Activated CD4-positive, alpha-beta T cell treated with anti-CD3 and anti-CD28 coated beads, Interleukin-2, amount 10 ng/mL, durations not matched to agents 7 days and 5 days (primary cell): ENCODE measurements at regions of chr1 and their contacts with region 1.

Region 1: DNA sequence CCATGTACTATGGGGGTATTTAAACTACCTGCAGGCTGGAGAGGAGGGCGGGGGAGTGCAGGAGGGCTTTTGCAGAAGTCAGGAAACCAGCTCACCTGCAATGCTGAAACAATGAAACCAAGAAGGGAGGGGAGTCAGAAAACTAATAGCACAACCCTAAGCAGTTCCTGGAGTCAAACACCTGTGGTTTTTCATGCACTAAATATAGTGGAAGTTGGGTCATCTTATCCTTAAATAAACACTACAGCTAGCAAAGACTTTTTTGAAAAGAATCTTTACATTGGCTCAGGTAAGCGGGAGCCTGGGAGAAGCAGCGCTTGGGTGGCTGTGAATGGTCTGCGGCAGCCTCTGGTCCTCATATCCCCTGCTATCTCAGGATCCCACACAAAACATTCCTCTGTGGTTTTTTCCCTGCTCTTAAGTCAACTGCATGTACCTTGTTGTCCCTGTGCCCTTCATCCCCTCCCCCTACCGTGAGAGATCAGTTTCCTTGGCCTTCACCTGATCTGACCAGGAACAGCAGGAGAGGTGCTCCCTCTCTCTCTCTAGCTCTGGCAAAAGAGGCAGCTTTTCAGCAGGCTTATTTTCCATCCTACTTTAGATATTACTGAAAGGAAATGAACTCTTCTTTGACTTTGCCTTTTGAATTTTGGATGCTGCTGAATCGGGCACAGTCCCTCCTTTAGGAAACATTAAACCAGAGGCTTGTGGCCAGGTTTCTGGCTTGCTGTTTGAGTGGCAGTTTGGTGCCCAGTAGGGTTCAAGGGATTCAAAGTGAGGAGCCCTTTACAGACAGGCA is 26.6 kb downstream of the TENT5C start:
- DNase-seq: no peak
- H3K4me3 Mint-ChIP-seq: peak overlapping the region; percentile 32
- H3K27ac Mint-ChIP-seq: peak overlapping the region; percentile 6
- H3K4me1 Mint-ChIP-seq: peaks cover 50% of the 10 kb centered on the region
- H3K27me3 Mint-ChIP-seq: peaks cover 14% of the 10 kb centered on the region

Region 2: DNA sequence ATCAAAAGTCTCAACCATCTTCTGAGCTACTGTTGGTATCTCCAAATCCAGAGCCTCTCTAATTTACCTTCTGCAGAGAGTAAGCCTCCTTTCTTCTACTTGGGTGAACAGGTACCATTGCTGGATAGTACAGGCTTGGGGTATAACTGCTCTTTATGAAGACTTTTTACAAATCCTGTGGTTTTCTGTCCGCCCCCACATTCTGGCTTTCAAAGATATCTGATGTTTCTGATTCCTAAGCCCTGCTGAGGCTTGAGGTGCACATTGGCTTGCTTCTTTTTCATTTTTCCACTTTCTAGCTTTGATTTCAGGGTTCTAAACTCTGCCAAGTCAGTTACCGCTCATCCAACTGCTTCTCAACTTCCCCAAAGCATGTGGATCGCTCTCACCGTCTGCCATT is 10.5 kb after region 1 on chr1:
- CTCF ChIA-PET with region 1: interaction called, 12 read pairs
- POLR2A ChIA-PET with region 1: no interaction called
- DNase-seq: no peak
- H3K4me3 Mint-ChIP-seq: no peak overlapping the region
- H3K27ac Mint-ChIP-seq: no peak overlapping the region
- H3K4me1 Mint-ChIP-seq: peaks cover 5% of the 10 kb centered on the region
- H3K27me3 Mint-ChIP-seq: peaks cover 25% of the 10 kb centered on the region